Spleen (tissue), 13 donors: ENCODE measurements at regions of chr11 and their contacts with region 1.

Region 1: GRCh38 chr11:129922674-129923073 is 27.3 kb upstream of the NFRKB start:
- DNase-seq: no peak
- H3K4me3 ChIP-seq: no peak overlapping the region
- H3K27ac ChIP-seq: no peak overlapping the region
- H3K4me1 ChIP-seq: peaks cover 0 to 19% (median 2%) of the 10 kb centered on the region in 6 donors
- H3K27me3 ChIP-seq: no peaks in the 10 kb centered on the region
- CTCF ChIP-seq: no peak
- POLR2A ChIP-seq: no peak

Region 2: GRCh38 chr11:130103296-130103814 is 180.7 kb after region 1 on chr11:
- intact Hi-C with region 1: no loop called
- DNase-seq: no peak
- H3K4me3 ChIP-seq: no peak overlapping the region
- H3K27ac ChIP-seq: no peak overlapping the region
- H3K4me1 ChIP-seq: peaks cover 5 to 63% (median 17%) of the 10 kb centered on the region in 6 donors
- H3K27me3 ChIP-seq: no peaks in the 10 kb centered on the region
- CTCF ChIP-seq: no peak
- POLR2A ChIP-seq: no peak

Region 3: DNA sequence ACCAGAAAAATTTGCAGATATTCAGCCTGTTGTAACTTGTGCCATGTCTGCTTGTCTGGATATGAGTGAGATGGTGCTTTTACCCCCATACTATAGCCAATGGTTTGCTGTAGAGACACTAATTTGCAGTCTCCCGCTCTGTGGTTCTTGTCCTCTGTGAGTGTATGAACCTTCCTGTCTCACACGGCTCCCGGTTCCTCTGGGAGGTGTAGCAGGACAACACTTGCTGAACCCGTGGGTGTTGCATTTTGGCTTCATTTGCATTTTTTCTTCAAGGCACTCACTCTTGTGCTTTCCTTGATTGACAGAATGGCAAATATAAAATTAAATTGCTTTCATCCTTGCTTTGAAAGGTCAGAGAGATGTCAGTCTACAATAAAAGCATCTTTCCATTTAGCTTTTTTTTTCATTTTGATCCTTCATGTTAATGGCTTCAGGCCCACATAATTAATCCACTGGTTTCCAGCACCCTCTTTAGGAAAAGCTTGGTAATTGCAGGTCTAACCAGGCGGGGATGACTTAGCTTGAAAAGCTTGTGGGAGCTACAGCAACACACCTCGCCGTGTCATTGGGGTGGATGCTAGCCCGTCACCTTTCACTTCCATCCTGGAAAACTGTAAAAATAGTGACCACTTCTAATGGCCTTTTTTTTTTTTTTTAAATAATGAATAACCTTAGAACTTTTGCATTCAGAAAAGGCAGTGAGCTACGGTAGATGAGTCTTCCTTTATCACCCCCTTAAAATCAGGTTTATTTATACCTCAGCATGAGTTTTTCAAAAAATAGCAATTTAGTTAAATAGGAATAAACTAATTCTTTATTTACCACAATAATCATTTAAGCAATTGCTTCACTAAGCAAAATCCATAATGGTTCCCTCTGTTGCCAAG is 209.5 kb after region 1 on chr11:
- intact Hi-C with region 1: loop called (anchors 1 kb)
- DNase-seq: no peak
- H3K4me3 ChIP-seq: no peak overlapping the region
- H3K27ac ChIP-seq: no peak overlapping the region
- H3K4me1 ChIP-seq: peaks cover 0 to 26% (median 6%) of the 10 kb centered on the region in 6 donors
- H3K27me3 ChIP-seq: no peaks in the 10 kb centered on the region
- CTCF ChIP-seq: peak; percentile 82 to 92 (median 88)
- POLR2A ChIP-seq: no peak

Region 4: DNA sequence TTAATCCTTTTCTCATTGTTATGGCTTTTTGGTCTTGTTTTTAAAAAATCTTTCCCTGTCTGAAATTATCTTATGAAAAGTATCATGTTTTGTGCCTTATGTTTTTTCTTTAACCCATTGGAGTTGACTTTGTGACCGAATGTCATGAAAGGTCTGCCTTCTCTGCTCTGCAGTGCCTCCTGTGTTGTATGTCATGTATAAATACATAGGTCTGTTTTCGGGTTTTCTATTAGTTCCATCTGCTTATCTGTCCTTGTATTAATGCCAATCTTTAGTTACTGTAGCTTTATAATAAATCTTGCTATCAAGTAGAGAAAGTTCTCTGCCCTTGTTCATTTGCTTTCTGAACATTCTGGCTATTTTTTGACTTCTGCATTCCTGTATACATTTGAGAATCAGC is 319.0 kb after region 1 on chr11:
- intact Hi-C with region 1: no loop called
- DNase-seq: no peak
- H3K4me3 ChIP-seq: no peak overlapping the region
- H3K27ac ChIP-seq: no peak overlapping the region
- H3K4me1 ChIP-seq: peaks cover 0 to 46% (median 17%) of the 10 kb centered on the region in 6 donors
- H3K27me3 ChIP-seq: no peaks in the 10 kb centered on the region
- CTCF ChIP-seq: no peak
- POLR2A ChIP-seq: no peak